PC-9 (cell line): ENCODE measurements at regions of chr13 and their contacts with region 1.

Region 1: GRCh38 chr13:68927387-68928026 is 1180.1 kb upstream of the ATXN8OS start:
- DNase-seq: peak in 1 of 2 experiments; percentile 25
- H3K4me3 ChIP-seq: no peak overlapping the region
- H3K27ac ChIP-seq: no peak overlapping the region
- H3K4me1 ChIP-seq: no peaks in the 10 kb centered on the region
- H3K27me3 ChIP-seq: no peaks in the 10 kb centered on the region
- CTCF ChIP-seq: peak; percentile 57; the same call in 1 of the 2 replicates

Region 2: DNA sequence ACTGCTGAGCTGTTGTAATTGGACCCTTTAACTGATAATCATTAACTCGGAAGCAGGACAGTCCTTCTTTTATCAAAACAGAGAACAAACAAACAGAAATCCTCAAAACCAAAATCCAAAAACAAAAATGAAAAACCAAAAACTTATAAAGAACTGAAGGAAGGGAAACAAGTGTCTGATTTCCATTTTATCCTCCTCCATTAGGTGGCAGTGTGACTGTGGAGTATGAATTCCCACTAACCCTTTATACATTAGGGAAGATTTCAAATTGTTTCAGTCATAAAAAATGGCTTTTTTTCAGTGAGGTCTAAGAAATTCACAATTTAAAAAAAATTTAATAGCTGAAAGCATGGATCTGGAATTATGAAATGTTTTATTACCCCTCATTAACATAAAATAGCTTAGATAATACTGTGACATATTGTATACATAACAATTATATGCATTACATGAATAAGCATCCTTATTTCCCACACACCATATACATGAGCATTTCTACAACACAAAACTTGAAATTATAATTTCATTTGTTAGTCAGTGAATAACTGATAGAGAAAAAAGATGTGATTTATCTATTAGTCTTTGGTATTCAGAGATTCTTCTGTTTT is 623.1 kb before region 1 on chr13:
- CTCF ChIA-PET with region 1: interaction called, 5 read pairs
- POLR2A ChIA-PET with region 1: no interaction called
- intact Hi-C with region 1: loop called (anchors 1 kb)
- DNase-seq: no peak
- H3K4me3 ChIP-seq: no peak overlapping the region
- H3K27ac ChIP-seq: no peak overlapping the region
- H3K4me1 ChIP-seq: no peaks in the 10 kb centered on the region
- H3K27me3 ChIP-seq: no peaks in the 10 kb centered on the region
- CTCF ChIP-seq: peak; percentile 54

Region 3: DNA sequence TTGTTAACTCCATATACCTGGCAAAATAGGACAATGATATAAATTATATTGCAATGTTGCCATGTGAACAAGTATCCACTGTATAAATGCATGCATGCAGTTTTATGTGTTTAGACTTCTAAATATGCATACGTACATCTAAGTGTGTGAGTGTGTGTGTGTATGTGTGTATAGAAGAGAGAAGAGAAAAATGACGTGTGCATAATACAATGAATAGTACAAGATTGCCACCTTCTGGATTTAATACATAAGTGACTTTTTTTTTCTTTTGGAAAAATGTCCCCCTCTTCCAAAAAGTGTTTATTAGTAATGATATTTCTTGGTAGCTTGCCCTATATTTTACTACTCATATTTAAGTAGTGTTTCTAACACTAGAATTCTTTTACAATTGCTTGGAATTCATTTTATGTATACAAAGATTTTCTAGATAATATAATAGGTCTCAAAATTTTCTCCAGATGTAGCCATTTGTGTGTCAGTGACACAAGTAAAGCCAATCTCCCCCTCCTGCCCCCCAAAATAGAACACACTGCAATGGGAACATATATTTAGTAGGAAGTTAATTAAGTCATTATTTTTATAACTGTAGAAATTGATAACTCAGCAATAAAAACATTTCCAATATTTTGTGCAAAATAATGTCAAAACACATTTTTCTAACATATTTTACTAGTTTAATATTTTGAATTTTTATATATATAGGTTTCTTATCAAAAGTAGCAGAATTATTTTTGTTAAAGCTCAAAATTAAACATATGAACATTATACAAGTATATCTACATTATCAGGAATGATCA is 396.8 kb after region 1 on chr13:
- CTCF ChIA-PET with region 1: no interaction called
- POLR2A ChIA-PET with region 1: no interaction called
- intact Hi-C with region 1: loop called (anchors 5 kb)
- DNase-seq: no peak
- H3K4me3 ChIP-seq: no peak overlapping the region
- H3K27ac ChIP-seq: no peak overlapping the region
- H3K4me1 ChIP-seq: no peaks in the 10 kb centered on the region
- H3K27me3 ChIP-seq: no peaks in the 10 kb centered on the region
- CTCF ChIP-seq: peak; percentile 54